ENCODE measurements at regions of chr15 and their contacts with region 1.

Region 1: DNA sequence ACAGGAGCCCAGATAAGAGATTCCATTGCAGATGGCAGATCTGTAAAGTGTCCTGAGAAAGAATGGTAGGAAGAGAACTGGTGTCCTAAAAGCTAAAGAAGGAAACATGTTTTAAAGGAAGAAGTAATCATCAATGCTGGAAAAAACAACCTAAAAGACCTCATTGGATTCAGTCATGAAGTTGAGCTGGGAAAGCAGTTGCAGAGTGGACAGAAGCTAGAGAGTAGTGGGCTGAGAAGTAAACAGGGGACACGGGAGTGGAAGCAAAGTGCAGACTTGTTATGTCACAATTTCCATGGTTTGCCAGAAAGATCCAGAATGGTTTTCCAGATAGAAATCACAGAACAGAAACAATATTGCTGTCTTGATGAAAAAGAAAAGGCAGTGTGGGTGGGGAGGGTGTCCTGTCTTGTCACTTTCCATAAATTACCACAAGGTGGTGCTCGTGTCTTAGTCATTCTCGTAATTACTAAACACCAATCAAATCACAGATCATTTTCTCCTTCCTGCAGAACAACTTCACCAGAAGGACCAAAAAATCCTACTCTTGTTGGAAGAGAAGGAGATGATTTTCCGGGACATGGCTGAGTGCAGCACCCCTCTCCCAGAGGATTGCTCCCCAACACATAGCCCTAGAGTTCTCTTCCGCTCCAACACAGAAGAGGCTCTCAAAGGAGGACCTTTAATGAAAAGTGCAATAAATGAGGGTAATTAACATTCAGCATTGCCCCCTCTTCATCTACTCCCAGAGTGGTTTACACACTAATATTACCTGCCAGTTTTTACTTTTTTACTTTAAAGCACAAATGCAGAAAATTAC is 64.5 kb downstream of the KLHL25 start:
- DNase-seq: peak; percentile 66
- H3K4me3 ChIP-seq: no peak overlapping the region
- H3K27ac ChIP-seq: peak overlapping the region in 1 of 2 donors; percentile 10
- H3K4me1 ChIP-seq: no peaks in the 10 kb centered on the region
- H3K27me3 ChIP-seq: no peaks in the 10 kb centered on the region
- CTCF ChIP-seq: peak; percentile 50 to 83 (median 81)
- POLR2A ChIP-seq: no peak

Region 2: DNA sequence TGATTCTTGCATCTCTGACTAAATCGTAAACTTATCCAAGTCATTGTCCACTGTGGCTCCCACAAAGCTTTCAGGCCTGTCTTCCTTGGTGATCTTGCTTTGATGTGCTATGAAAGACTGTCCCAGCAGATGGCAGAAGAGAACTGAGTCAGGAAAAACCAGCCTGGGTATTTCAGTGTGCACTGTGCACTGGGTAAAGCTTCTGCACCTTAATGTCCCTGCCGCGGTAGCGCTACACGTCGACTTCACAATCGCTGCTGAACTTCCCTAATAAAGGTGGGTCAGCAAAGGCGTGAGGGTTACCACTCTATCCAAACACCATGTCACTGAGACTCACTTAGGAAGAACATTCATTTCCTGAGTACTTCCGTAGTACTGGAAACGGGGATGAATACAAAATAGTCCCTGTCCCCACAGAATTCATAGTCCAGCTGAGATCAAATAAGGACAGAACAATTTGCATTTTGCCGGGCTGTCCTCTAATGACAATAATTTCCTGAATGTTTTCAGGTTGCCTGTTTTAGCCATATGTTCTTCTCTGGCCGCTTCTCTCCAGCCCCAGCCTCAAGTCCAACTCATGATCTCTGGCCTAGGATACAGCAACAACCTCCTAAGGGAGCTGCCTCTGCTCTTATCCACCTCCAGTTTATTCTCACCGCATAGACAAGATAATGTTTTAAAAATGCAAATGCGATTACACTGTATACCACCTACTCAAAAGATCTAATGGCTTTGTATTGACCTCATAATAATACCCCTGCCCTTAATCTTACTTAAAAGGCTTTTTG is 433.4 kb before region 1 on chr15:
- intact Hi-C with region 1: loop called (anchors 10 kb)
- DNase-seq: peak; percentile 76
- H3K4me3 ChIP-seq: no peak overlapping the region
- H3K27ac ChIP-seq: no peak overlapping the region
- H3K4me1 ChIP-seq: no peaks in the 10 kb centered on the region
- H3K27me3 ChIP-seq: no peaks in the 10 kb centered on the region
- CTCF ChIP-seq: peak; percentile 26 to 86 (median 75)
- POLR2A ChIP-seq: no peak

Region 3: DNA sequence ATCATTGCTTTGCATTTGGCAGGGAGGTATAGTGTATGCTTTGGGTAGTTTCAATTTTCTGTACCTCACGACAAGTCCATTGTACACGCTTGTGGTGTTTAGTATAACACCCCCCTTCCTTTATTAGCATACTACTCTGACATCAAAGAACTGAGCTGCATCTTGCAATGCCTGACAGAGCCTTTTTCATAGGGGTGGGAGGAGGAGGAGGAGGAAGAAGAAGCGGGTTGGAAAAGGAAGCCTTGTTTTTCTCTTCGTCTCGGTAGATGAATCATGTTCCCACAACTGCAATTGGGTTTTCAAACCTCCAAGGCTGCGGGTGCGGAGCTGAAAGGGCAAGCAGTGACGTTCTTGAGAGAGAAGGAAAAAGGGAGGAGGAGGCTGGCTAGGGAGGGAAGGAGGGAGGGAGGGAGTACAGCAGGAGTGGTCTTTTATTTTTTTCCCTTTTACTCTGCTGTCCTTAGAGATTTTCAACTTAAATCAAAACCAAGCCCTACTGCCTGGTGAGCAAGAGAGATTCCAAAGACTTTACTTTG is 111.2 kb before region 1 on chr15:
- intact Hi-C with region 1: loop called (anchors 5 kb)
- DNase-seq: peak; percentile 47
- H3K4me3 ChIP-seq: peak overlapping the region; percentile 12
- H3K27ac ChIP-seq: peak overlapping the region; percentile 60 to 66
- H3K4me1 ChIP-seq: no peaks in the 10 kb centered on the region
- H3K27me3 ChIP-seq: no peaks in the 10 kb centered on the region
- CTCF ChIP-seq: no peak
- POLR2A ChIP-seq: peak; percentile 7

Measured in prostate gland (tissue), 2 donors.